ENCODE measurements at regions of chr1 and their contacts with region 1.

Region 1: DNA sequence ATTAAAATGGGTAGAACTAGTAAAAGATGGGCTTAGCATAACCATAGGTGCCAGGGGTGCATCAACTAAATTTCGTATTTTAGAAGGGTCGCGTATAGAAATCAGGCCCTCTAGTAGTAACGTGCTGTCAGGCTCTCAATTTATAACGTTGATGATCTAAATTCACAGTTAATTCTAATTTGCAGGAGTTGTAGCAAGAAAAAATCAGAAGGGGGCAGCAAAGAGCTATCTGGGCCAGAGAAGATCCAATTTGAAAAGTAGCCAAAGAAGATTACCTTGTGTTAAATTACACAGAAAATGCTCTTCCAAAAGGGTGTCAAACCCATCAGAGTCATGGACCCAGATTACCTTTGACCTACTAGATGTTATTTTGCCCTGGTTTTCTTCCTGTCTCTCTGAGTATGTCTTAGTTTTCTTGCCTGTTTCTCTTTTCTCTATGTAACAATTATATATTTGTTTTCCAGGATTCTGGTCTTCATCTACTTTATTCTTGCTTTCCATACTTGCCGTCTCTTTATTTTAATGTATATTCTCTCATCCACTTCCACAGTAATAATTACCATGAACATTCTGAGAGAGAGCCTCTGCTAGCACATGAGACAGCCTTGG is 1030.9 kb downstream of the AMY1C start:
- DNase-seq: peak; percentile 49
- H3K4me3 ChIP-seq: no peak overlapping the region
- H3K27ac ChIP-seq: no peak overlapping the region
- H3K4me1 ChIP-seq: no peaks in the 10 kb centered on the region
- H3K27me3 ChIP-seq: no peaks in the 10 kb centered on the region

Region 2: GRCh38 chr1:104315823-104316222 is 464.8 kb before region 1 on chr1:
- in situ Hi-C with region 1: no loop called
- DNase-seq: no peak
- H3K4me3 ChIP-seq: no peak overlapping the region
- H3K27ac ChIP-seq: no peak overlapping the region
- H3K4me1 ChIP-seq: no peaks in the 10 kb centered on the region
- H3K27me3 ChIP-seq: no peaks in the 10 kb centered on the region

Region 3: DNA sequence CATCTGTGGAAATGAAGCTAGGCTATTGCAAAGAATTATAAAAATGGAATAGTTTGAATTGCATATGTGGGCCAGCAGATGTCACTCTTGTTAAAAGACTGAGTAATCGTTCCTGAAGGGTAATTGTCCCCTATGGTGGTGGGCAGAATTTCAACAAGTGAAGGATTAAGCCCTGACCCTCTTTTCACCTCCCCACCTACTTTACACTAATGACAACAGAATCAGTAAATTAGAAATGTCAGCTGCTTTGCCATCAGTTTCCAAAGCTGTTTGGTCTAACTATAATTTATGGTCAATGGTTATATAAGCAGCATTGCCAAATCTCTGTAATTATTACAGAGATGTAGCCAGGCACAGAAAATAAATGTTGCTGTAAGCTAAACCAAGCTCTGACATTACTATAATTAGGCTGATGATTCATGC is 132.3 kb before region 1 on chr1:
- in situ Hi-C with region 1: no loop called
- DNase-seq: peak; percentile 12
- H3K4me3 ChIP-seq: no peak overlapping the region
- H3K27ac ChIP-seq: no peak overlapping the region
- H3K4me1 ChIP-seq: no peaks in the 10 kb centered on the region
- H3K27me3 ChIP-seq: no peaks in the 10 kb centered on the region

Region 4: GRCh38 chr1:105017587-105017986 is 237.0 kb after region 1 on chr1:
- in situ Hi-C with region 1: no loop called
- DNase-seq: no peak
- H3K4me3 ChIP-seq: no peak overlapping the region
- H3K27ac ChIP-seq: no peak overlapping the region
- H3K4me1 ChIP-seq: no peaks in the 10 kb centered on the region
- H3K27me3 ChIP-seq: no peaks in the 10 kb centered on the region

Region 5: GRCh38 chr1:105608713-105609112 is 828.1 kb after region 1 on chr1:
- in situ Hi-C with region 1: loop called (anchors 25 kb)
- DNase-seq: peak; percentile 53
- H3K4me3 ChIP-seq: no peak overlapping the region
- H3K27ac ChIP-seq: no peak overlapping the region
- H3K4me1 ChIP-seq: no peaks in the 10 kb centered on the region
- H3K27me3 ChIP-seq: no peaks in the 10 kb centered on the region

Region 6: GRCh38 chr1:105793536-105794146 is 1013.1 kb after region 1 on chr1:
- in situ Hi-C with region 1: loop called (anchors 25 kb)
- DNase-seq: peak; percentile 50
- H3K4me3 ChIP-seq: no peak overlapping the region
- H3K27ac ChIP-seq: no peak overlapping the region
- H3K4me1 ChIP-seq: no peaks in the 10 kb centered on the region
- H3K27me3 ChIP-seq: no peaks in the 10 kb centered on the region